ENCODE measurements at regions of chr19 and their contacts with region 1.

Region 1: DNA sequence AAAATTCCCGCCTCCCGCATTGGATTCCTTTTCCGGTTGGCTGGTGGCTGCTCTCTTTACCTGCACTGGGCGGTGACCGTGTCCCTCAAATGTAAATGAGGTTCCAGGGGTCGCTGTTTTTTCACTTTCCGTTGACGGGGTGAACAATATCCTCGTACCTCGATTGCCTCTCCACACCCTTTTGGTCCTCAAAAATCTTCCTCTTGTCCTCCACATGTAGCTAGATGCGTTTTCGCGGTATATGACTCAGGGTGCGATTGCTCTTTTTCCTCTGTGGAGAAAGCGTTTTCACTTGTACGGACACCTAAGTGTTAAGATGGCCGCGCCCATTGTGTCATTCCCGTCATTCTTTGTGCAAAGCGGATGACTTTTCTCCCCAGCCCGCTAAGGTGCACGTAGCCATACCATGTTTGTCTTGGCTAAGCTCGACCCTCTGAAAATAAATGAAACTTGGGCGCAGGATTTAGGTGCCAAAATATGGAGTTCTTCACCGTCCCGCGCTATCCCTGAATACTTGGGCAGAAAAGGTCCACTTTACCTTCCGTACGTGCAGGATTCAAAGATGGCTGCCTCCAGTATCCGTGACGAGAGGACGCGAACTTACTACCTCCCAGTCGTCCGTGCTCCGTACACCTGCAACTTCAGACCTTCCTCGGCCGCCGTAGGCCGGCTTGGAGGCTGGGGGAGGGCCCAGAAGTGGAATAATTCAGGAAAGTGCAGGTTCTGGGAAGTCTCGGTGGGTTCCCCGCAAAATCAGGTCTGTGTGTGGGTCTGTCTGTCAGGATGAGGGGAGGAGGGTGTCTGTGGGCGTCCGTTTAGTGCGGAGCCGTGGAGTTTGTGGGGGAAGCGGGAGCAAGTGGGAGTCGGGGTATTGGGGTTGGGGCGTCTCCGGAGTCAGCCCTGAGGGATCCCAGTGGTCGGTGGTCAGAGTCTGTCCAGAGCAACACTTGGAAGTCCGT is at the start of gene ZNF613:
- DNase-seq: peak; percentile 91
- ATAC-seq: peak; percentile 95
- H3K4me3 Mint-ChIP-seq: peak within 1 kb of the TSS; percentile 95
- H3K27ac Mint-ChIP-seq: peak within 1 kb of the TSS; percentile 97
- H3K4me1 Mint-ChIP-seq: peaks cover 20% of the 10 kb centered on the region
- H3K27me3 Mint-ChIP-seq: no peaks in the 10 kb centered on the region
- total RNA-seq, gene ZNF613: 4.2 to 6.3 TPM

Region 2: GRCh38 chr19:51784922-51785690 is 142.0 kb before region 1 on chr19:
- CTCF ChIA-PET with region 1: no interaction called
- POLR2A ChIA-PET with region 1: no interaction called
- intact Hi-C with region 1: loop called in 1 of 2 experiments (anchors 1 kb)
- DNase-seq: peak; percentile 87
- ATAC-seq: peak; percentile 97
- H3K4me3 Mint-ChIP-seq: no peak overlapping the region
- H3K27ac Mint-ChIP-seq: no peak overlapping the region
- H3K4me1 Mint-ChIP-seq: peaks cover 4% of the 10 kb centered on the region
- H3K27me3 Mint-ChIP-seq: peaks cover 16% of the 10 kb centered on the region

Region 3: DNA sequence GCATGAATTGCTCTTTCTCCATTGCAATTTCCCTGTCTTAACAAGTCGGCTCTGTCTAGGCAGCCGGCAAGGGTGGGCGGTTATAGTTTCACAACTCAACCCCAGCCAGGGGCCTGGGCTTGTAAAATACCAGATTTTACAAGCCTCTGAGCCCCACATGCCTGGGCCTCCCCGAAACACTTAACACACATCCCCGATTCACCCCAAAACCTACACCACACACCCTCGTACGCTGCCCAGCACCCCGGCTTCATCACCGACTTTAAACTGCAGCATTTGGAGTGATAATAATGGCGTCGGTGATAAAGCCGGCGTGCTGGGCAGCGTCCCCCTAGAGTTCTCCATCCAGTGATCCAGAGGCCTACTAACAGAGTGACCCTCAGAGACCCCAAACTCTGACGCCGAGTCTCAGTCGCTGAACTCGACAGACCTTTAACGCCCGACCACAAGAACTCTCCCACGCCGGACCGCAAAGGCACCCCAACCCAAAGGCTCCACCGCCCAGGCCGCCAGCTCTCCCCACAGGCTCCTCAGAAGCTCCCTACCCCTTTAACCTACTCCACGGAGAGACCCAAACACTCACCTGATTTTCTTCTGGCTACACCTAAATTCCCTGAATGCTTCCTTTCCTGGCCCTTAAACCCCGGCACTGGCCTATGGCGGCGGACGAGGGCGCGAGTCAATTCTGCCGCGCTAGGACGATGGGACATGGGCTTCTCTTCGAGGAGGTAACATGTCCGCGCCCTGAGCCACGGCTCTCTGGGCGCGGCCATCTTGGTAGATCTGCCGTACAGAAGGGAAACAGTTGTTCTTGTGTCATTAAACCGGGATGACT is 22.5 kb before region 1 on chr19 and contains the start of gene ZNF649:
- CTCF ChIA-PET with region 1: no interaction called
- POLR2A ChIA-PET with region 1: no interaction called
- intact Hi-C with region 1: loop called (anchors 1 kb)
- DNase-seq: peak; percentile 89
- ATAC-seq: peak; percentile 92
- H3K4me3 Mint-ChIP-seq: peak within 1 kb of the TSS; percentile 91
- H3K27ac Mint-ChIP-seq: peak within 1 kb of the TSS; percentile 99
- H3K4me1 Mint-ChIP-seq: peaks cover 22% of the 10 kb centered on the region
- H3K27me3 Mint-ChIP-seq: peaks cover 18% of the 10 kb centered on the region
- total RNA-seq, gene ZNF649: 9.6 to 11.2 TPM

Region 4: GRCh38 chr19:52007806-52008557 is 80.9 kb after region 1 on chr19 and contains the start of gene ZNF615:
- CTCF ChIA-PET with region 1: no interaction called
- POLR2A ChIA-PET with region 1: no interaction called
- intact Hi-C with region 1: loop called in 1 of 2 experiments (anchors 1 kb)
- DNase-seq: peak; percentile 93
- ATAC-seq: peak; percentile 97
- H3K4me3 Mint-ChIP-seq: peak within 1 kb of the TSS; percentile 90
- H3K27ac Mint-ChIP-seq: peak within 1 kb of the TSS; percentile 98
- H3K4me1 Mint-ChIP-seq: peaks cover 15% of the 10 kb centered on the region
- H3K27me3 Mint-ChIP-seq: no peaks in the 10 kb centered on the region
- total RNA-seq, gene ZNF615: 8.7 to 9.0 TPM

Measured in activated CD4-positive, alpha-beta T cell treated with anti-CD3 and anti-CD28 coated beads for 36 hours (primary cell).